T-cell (primary cell): ENCODE measurements at regions of chr10 and their contacts with region 1.

Region 1: DNA sequence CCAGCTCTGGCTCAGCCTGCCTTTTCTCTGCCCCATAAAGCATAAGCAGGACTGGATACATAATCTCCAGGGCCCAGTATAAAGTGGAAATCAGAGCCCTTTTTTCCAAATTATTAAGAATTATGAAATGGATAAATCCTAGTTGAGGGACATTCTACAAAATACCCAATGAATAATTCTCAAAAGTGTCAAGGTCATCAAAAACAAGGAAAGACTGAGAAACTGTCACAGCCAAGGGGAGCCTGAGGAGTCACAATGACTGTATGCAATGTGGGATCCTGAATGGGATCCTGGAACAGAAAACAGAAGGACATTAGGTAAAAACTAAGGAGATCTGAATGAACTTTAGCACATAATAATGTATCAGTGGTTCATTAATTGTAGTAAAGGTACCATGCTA is 4.8 kb upstream of the UNC5B start:
- DNase-seq: no peak
- ATAC-seq: no peak
- H3K4me3 ChIP-seq: no peak overlapping the region
- H3K4me3 Mint-ChIP-seq: no peak overlapping the region
- H3K27ac ChIP-seq: no peak overlapping the region
- H3K27ac Mint-ChIP-seq: no peak overlapping the region
- H3K4me1 ChIP-seq: peaks cover 0 to 12% of the 10 kb centered on the region in 2 experiments
- H3K4me1 Mint-ChIP-seq: peaks cover 5 to 13% (median 6%) of the 10 kb centered on the region in 3 donors
- H3K27me3 ChIP-seq: peaks cover 5 to 50% of the 10 kb centered on the region in 2 experiments
- H3K27me3 Mint-ChIP-seq: peaks cover 57 to 65% of the 10 kb centered on the region in 2 donors

Region 2: GRCh38 chr10:70799124-70799523 is 408.5 kb before region 1 on chr10:
- CTCF ChIA-PET with region 1: no interaction called
- POLR2A ChIA-PET with region 1: interaction called in 1 of 2 experiments, 12 read pairs
- DNase-seq: no peak
- ATAC-seq: no peak
- H3K4me3 ChIP-seq: no peak overlapping the region
- H3K4me3 Mint-ChIP-seq: no peak overlapping the region
- H3K27ac ChIP-seq: no peak overlapping the region
- H3K27ac Mint-ChIP-seq: no peak overlapping the region
- H3K4me1 ChIP-seq: no peaks in the 10 kb centered on the region
- H3K4me1 Mint-ChIP-seq: no peaks in the 10 kb centered on the region
- H3K27me3 ChIP-seq: peaks cover 0 to 21% of the 10 kb centered on the region in 2 experiments
- H3K27me3 Mint-ChIP-seq: peaks cover 6 to 34% of the 10 kb centered on the region in 2 donors